Posterior cingulate gyrus (tissue), 11 donors: ENCODE measurements at regions of chr1 and their contacts with region 1.

Region 1: GRCh38 chr1:161367684-161368400 is at the start of gene CFAP126:
- DNase-seq: peak in 6 of 10 donors; percentile 19 to 90 (median 47)

Region 2: DNA sequence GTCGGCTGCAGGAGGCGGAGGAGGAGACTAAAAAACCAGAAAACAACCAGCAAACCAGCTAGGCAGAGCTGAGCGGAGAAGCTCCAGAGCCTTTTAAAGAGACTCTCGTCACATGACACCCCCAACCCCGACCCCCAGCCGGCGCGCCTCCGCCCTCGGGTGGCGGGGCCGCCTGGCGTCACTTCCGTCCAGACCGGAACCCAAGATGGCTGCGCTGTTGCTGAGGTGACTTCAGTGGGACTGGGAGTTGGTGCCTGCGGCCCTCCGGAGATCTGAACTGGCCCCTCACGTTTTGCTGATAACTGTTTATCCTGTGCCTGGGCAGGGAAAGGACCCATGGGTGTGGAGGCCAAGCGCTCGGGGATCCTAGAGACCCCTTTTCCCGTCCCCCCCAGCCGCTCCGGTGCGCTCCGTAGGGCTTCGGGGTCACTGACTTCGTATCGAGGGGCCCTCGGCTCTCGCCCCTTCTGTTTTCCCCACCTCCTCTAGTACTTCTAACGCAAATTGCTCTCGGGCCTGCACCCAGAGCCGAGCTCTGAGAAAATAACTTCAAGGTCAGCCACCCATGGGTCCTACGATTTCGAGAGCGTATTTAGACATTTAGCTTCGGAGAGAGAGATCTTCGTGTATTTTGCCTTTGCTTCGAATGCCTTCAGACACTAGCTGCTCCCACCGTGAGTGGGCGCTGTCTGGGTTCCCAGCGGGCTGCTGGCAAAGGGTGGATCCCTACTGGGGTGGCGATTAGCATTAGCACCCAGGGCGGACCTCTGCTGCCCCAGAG is 53.5 kb before region 1 on chr1 and contains the start of gene SDHC:
- intact Hi-C with region 1: loop called (anchors 10 kb)
- DNase-seq: peak; percentile 92 to 99 (median 94)

Region 3: GRCh38 chr1:161499099-161500039 is 131.5 kb after region 1 on chr1:
- intact Hi-C with region 1: no loop called
- DNase-seq: no peak